Heart right ventricle (tissue), 16 donors: ENCODE measurements at regions of chr15 and their contacts with region 1.

Region 1: GRCh38 chr15:67833710-67834511 is 5.9 kb downstream of the RNU6-1 start:
- DNase-seq: no peak
- ATAC-seq: peak in 7 of 8 donors; percentile 13 to 50 (median 32)
- H3K4me3 ChIP-seq: peak overlapping the region in 9 of 10 donors; percentile 25 to 52 (median 45)
- H3K27ac ChIP-seq: no peak overlapping the region
- H3K4me1 ChIP-seq: peaks cover 21 to 62% (median 50%) of the 10 kb centered on the region in 9 donors
- H3K27me3 ChIP-seq: peaks cover 46 to 75% (median 73%) of the 10 kb centered on the region in 7 donors
- CTCF ChIP-seq: peak; percentile 8 to 60 (median 52)

Region 2: DNA sequence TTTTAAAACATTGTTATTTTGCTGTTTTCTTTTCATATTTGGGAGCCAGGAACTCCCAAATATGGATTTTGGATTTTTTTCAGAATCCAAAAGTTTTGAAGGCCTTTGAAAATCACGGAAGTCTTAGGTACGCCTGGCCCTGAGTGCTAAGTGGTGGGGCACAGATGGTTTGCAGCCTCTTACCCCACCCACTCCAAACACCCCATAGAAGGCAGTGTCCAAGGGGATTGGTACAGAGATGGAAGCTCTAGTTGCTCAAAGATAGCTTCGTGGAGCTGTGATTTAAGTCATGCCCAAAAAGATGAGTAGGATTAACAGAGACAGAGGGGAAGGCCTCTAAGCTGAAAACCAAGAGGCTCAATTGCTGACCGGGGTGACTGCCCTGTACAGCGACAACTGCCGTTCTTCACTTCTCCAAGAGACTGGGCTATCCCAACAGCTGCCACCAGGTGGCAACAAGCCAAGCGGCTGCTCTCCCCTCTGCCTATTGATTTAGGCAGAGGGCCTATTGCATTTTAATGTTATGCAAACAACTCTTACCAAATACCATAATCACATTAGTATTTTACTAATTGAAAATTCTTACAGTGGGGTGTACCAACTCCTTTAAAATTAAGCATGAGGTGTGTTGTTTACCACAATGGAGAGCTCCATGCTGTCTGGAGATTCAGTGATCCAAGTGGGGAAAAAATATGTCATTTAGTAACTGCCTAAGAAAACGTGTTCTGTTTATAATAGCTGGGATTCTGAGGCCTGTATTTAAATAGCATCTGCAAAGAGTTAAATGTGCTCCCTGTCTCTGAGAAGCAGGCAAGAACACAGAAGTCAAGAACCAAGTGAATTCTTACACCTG is 377.0 kb before region 1 on chr15:
- intact Hi-C with region 1: loop called (anchors 1 to 5 kb)
- DNase-seq: peak; percentile 83
- ATAC-seq: peak; percentile 78 to 90 (median 86)
- H3K4me3 ChIP-seq: no peak overlapping the region
- H3K27ac ChIP-seq: no peak overlapping the region
- H3K4me1 ChIP-seq: peaks cover 0 to 6% (median 0%) of the 10 kb centered on the region in 9 donors
- H3K27me3 ChIP-seq: no peaks in the 10 kb centered on the region
- CTCF ChIP-seq: peak; percentile 60 to 93 (median 91)

Region 3: GRCh38 chr15:67521029-67521811 is 312.7 kb before region 1 on chr15 and contains the start of gene C15orf61:
- intact Hi-C with region 1: loop called in 5 of 10 experiments (anchors 5 to 10 kb)
- DNase-seq: peak; percentile 82 to 89
- ATAC-seq: peak; percentile 90 to 95 (median 92)
- H3K4me3 ChIP-seq: peak within 1 kb of the TSS; percentile 55 to 82 (median 76)
- H3K27ac ChIP-seq: peak within 1 kb of the TSS; percentile 92 to 99 (median 97)
- H3K4me1 ChIP-seq: peaks cover 0 to 40% (median 29%) of the 10 kb centered on the region in 9 donors
- H3K27me3 ChIP-seq: no peaks in the 10 kb centered on the region
- CTCF ChIP-seq: peak in 3 of 9 donors; percentile 6 to 25 (median 21)
- total RNA-seq, gene C15orf61: 6.9 to 15.0 (median 11.9) TPM